HEK293T (cell line): ENCODE measurements at regions of chr14 and their contacts with region 1.

Region 1: DNA sequence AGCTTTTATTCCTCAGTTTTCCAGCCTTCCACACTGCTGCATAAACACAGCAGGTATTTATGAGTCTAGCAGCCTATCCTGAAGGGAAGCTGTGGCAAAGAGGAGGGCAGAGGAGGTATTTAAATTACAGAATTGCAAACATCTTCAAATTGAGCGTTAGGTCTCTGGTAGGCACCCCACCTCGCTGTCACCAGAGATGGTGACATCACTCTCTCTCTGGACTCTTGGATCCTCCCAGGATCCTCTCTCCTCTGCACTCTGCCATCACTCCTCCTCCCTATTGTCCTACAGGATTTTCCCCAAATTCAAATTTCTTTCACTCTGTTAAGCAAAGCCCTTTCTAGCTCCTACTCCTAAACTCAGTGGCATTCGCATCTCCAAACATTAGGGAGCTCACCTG is 6.7 kb downstream of the PLEKHD1 start:
- DNase-seq: no peak

Region 2: GRCh38 chr14:69346710-69347109 is 144.5 kb before region 1 on chr14:
- CTCF ChIA-PET with region 1: no interaction called
- POLR2A ChIA-PET with region 1: no interaction called
- DNase-seq: peak; percentile 78

Region 3: DNA sequence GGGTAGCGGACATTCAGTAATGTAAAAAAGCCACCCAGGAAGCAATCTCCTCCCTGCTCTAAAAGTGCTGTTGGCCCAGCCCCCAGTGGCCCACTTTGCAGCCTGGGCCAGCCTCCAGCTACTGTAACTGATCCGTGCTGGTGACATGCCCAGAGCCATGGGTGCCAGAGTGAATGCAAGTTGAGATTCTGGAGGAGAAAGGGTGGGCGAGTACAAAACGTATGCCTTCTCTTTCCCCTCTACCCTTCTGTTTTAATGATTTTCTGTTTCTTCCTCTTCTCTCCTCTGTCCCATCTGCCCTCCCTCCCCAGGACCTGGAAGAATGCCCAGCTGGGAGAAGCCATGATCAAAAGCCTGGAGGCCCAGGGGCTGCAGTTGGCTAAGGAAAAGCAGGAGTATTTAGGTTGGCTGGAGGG is 10.2 kb after region 1 on chr14:
- CTCF ChIA-PET with region 1: interaction called, 10 read pairs
- POLR2A ChIA-PET with region 1: no interaction called
- DNase-seq: no peak